GM12878 (cell line): ENCODE measurements at regions of chr6 and their contacts with region 1.

Region 1: DNA sequence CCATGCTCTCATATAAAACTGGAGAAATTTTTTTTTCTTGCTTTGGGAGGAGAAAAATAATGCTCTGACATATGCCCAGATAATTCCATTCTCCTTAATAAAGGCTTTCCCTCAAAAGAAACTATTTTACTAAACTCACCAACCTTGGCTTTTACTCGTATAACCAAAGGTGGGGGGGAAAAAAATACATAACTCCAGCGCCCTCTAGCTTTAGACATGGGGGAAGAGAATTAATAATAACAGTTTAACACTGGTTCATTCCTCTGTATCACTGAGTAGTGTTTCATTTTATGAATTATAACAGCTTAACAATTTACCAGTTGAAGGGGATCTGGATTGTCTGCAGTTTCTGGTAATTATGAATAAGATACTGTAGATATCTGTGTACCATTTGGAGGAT is 1226.1 kb downstream of the GRIK2 start:
- DNase-seq: no peak
- ATAC-seq: peak; percentile 82
- H3K4me3 ChIP-seq: no peak overlapping the region
- H3K27ac ChIP-seq: no peak overlapping the region
- H3K4me1 ChIP-seq: no peaks in the 10 kb centered on the region
- H3K27me3 ChIP-seq: no peaks in the 10 kb centered on the region
- CTCF ChIP-seq: peak; percentile 23 to 55 (median 36); a peak in 4 of 6 replicates
- EP300 ChIP-seq: no peak
- POLR2A ChIP-seq: no peak
- RAD21 ChIP-seq: peak; percentile 44; the same call in 1 of the 2 replicates

Region 2: DNA sequence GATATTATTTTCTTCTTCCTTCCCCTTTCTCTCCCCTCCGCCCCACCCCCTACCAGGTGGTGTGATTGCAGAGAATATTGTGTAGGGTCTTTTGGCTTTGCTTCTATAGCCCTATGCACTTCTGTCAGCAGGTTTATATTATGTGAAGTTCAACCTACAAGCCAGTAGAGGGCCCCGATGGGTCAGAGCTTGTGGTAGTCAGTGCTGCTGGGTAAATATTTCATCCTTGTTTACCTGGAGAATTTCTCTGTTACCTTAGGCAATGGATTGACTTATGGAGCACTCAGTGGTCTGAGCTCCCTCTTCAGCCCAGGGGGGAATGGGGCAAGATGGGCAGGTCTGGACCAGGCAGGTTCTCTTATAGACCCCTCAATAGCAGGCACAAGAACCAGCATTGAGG is 505.2 kb before region 1 on chr6:
- CTCF ChIA-PET with region 1: interaction called, 18 read pairs
- POLR2A ChIA-PET with region 1: no interaction called
- RAD21 ChIA-PET with region 1: interaction called, 4 read pairs
- SMC1A ChIA-PET with region 1: interaction called, 6 read pairs
- in situ Hi-C with region 1: no loop called
- intact Hi-C with region 1: loop called (anchors 1 kb)
- DNase-seq: no peak
- ATAC-seq: peak; percentile 91
- H3K4me3 ChIP-seq: no peak overlapping the region
- H3K27ac ChIP-seq: no peak overlapping the region
- H3K4me1 ChIP-seq: no peaks in the 10 kb centered on the region
- H3K27me3 ChIP-seq: no peaks in the 10 kb centered on the region
- CTCF ChIP-seq: peak; percentile 12 to 52 (median 44); a peak in 3 of 6 replicates
- EP300 ChIP-seq: no peak
- POLR2A ChIP-seq: no peak
- RAD21 ChIP-seq: peak; percentile 48; the same call in 1 of the 2 replicates

Region 3: DNA sequence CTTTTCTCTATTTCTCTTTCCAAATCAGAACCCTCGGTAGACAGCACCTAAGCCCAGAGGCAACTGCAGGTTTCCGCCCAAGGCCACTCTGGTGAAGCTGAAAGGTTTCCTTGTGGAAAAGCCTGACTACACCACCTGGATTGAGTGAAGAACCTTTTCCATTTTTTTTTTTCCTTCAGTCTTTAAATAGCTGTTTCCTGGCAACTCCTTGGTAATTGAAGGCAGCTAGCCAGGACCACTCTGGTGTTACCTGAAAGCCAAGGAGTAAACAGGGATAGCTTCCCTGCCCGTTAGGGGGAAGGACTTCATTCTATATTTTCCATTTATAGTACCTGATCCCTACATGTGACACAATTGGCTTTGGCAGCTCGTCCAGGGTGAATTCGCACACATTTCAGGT is 12.3 kb after region 1 on chr6:
- CTCF ChIA-PET with region 1: interaction called, 10 read pairs
- POLR2A ChIA-PET with region 1: no interaction called
- RAD21 ChIA-PET with region 1: no interaction called
- SMC1A ChIA-PET with region 1: no interaction called
- in situ Hi-C with region 1: no loop called
- intact Hi-C with region 1: no loop called
- DNase-seq: no peak
- ATAC-seq: no peak
- H3K4me3 ChIP-seq: no peak overlapping the region
- H3K27ac ChIP-seq: no peak overlapping the region
- H3K4me1 ChIP-seq: no peaks in the 10 kb centered on the region
- H3K27me3 ChIP-seq: no peaks in the 10 kb centered on the region
- CTCF ChIP-seq: no peak
- EP300 ChIP-seq: no peak
- POLR2A ChIP-seq: no peak
- RAD21 ChIP-seq: no peak

Region 4: GRCh38 chr6:102670735-102671134 is 51.1 kb after region 1 on chr6:
- CTCF ChIA-PET with region 1: no interaction called
- POLR2A ChIA-PET with region 1: no interaction called
- RAD21 ChIA-PET with region 1: no interaction called
- SMC1A ChIA-PET with region 1: no interaction called
- in situ Hi-C with region 1: no loop called
- intact Hi-C with region 1: no loop called
- DNase-seq: no peak
- ATAC-seq: no peak
- H3K4me3 ChIP-seq: no peak overlapping the region
- H3K27ac ChIP-seq: no peak overlapping the region
- H3K4me1 ChIP-seq: no peaks in the 10 kb centered on the region
- H3K27me3 ChIP-seq: no peaks in the 10 kb centered on the region
- CTCF ChIP-seq: no peak
- EP300 ChIP-seq: no peak
- POLR2A ChIP-seq: no peak
- RAD21 ChIP-seq: no peak